ENCODE measurements at regions of chr1 and their contacts with region 1.

Region 1: GRCh38 chr1:160837558-160838205 is 25.0 kb downstream of the CD244 start:
- DNase-seq: peak; percentile 52 to 91 (median 87)
- ATAC-seq: peak; percentile 97
- H3K4me3 ChIP-seq: peak overlapping the region; percentile 37
- H3K4me3 Mint-ChIP-seq: peak overlapping the region; percentile 62 to 90 (median 76)
- H3K27ac ChIP-seq: peak overlapping the region; percentile 69
- H3K27ac Mint-ChIP-seq: peak overlapping the region; percentile 78 to 98 (median 95)
- H3K4me1 ChIP-seq: peaks cover 50 to 60% of the 10 kb centered on the region in 2 donors
- H3K4me1 Mint-ChIP-seq: peaks cover 57 to 83% (median 71%) of the 10 kb centered on the region in 7 donors
- H3K27me3 ChIP-seq: no peaks in the 10 kb centered on the region
- H3K27me3 Mint-ChIP-seq: no peaks in the 10 kb centered on the region

Region 2: GRCh38 chr1:160777486-160778089 is 60.1 kb before region 1 on chr1:
- CTCF ChIA-PET with region 1: interaction called, 49 read pairs
- POLR2A ChIA-PET with region 1: interaction called, 3 read pairs
- intact Hi-C with region 1: no loop called
- DNase-seq: peak in 7 of 9 donors; percentile 50 to 74 (median 68)
- ATAC-seq: peak; percentile 80
- H3K4me3 ChIP-seq: no peak overlapping the region
- H3K4me3 Mint-ChIP-seq: no peak overlapping the region
- H3K27ac ChIP-seq: no peak overlapping the region
- H3K27ac Mint-ChIP-seq: peak overlapping the region in 4 of 9 donors; percentile 17 to 80 (median 37)
- H3K4me1 ChIP-seq: peaks cover 0 to 11% of the 10 kb centered on the region in 2 donors
- H3K4me1 Mint-ChIP-seq: peaks cover 12 to 42% (median 15%) of the 10 kb centered on the region in 7 donors
- H3K27me3 ChIP-seq: no peaks in the 10 kb centered on the region
- H3K27me3 Mint-ChIP-seq: no peaks in the 10 kb centered on the region

Region 3: DNA sequence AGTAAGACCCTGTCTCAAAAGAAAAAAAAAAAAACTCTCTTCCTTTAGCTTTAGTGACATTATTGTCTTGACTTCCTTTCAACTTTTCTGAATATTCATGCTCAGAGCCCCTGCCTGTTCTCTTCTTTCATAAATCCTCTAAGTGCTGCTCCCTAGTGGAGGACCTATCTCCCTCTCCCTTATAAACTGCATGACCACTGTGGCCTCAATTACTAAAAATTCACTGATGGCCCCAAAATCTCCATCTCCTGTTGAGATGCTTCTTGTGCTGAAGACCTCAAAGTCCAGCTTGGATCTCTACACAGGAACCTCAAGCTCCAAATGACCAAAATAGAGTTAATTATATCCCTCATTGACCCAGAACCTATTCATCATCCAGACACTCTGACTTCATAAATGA is 39.5 kb after region 1 on chr1:
- CTCF ChIA-PET with region 1: interaction called, 65 read pairs
- POLR2A ChIA-PET with region 1: interaction called, 10 read pairs
- intact Hi-C with region 1: loop called (anchors 1 kb)
- DNase-seq: peak in 7 of 9 donors; percentile 32 to 72 (median 50)
- ATAC-seq: peak; percentile 83
- H3K4me3 ChIP-seq: no peak overlapping the region
- H3K4me3 Mint-ChIP-seq: peak overlapping the region in 2 of 10 donors; percentile 1 to 4
- H3K27ac ChIP-seq: no peak overlapping the region
- H3K27ac Mint-ChIP-seq: peak overlapping the region in 4 of 9 donors; percentile 5 to 15 (median 10)
- H3K4me1 ChIP-seq: peaks cover 8 to 10% of the 10 kb centered on the region in 2 donors
- H3K4me1 Mint-ChIP-seq: peaks cover 15 to 28% (median 23%) of the 10 kb centered on the region in 7 donors
- H3K27me3 ChIP-seq: no peaks in the 10 kb centered on the region
- H3K27me3 Mint-ChIP-seq: peaks cover 0 to 11% (median 0%) of the 10 kb centered on the region in 5 donors

Region 4: DNA sequence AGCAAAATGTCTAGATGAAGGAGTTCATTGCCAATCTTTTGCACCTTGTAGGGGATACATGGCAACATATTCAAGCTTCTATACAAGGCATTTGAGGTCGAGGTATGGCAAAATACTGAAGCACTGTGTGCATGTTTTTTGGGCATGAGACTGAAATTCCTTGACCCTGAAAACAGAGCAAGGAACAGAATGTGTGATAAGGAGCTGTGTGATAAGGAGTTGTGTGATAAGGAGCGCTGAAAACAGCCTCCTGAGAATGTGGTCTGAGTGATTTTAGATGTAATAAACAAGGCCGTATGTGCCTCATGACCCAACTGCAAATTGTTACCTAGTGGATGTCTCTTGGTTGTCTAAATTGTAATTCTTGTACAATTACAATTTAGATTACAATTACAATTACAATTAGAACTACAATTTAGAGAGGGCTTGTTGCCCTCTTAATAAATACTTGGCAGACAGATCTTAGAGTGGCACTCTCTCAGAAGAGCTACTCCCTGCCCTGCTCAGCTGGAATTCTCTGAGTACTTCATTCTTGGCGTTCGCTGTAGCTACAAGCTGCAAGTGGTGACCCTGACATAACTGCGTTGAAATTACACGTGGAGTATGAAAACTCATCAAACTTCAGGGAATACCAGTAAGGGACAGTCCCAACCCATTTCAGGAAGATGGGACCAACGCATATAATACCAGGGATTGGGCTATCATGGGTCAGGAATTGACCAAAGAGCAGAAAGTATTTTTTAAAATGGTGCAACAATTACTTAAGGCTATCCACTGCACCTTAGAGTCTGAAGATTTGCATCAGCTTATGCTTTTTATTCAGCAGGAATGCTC is 67.3 kb after region 1 on chr1:
- CTCF ChIA-PET with region 1: no interaction called
- POLR2A ChIA-PET with region 1: no interaction called
- intact Hi-C with region 1: no loop called
- DNase-seq: no peak
- ATAC-seq: no peak
- H3K4me3 ChIP-seq: no peak overlapping the region
- H3K4me3 Mint-ChIP-seq: no peak overlapping the region
- H3K27ac ChIP-seq: no peak overlapping the region
- H3K27ac Mint-ChIP-seq: no peak overlapping the region
- H3K4me1 ChIP-seq: no peaks in the 10 kb centered on the region
- H3K4me1 Mint-ChIP-seq: no peaks in the 10 kb centered on the region
- H3K27me3 ChIP-seq: no peaks in the 10 kb centered on the region
- H3K27me3 Mint-ChIP-seq: peaks cover 0 to 26% (median 0%) of the 10 kb centered on the region in 5 donors

Region 5: DNA sequence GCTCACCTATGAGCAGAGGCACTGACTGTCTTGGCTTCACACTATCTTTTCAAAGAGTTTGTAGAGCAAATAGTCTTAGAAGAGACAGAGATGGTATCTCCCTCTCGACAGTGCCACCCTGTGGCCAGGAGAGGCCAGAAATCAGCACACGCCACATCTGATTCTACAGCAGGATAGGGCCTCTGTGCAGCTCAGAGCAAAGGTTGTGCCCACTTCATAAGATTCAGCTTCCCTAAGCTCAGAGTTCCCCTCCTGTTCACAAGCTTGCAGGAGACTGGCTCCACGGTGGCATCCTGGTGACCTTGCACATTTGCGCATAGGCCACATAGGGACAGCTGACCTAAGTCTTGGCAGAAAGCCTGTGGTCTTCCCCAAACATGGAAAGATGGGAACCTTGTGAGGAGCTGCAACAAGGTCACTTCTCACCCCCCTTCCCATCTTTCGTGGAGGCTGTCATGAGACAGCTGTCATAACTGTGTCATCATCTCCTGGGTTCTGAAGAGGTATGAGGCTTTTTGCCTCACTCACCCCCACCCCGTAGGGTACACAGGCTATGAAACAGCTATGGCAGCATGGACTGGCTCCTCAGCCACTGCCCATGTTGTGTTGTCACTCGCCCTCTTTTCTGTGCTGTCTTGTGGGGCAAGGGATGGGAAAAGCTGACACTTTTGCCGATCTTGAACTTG is 113.9 kb after region 1 on chr1:
- CTCF ChIA-PET with region 1: interaction called, 167 read pairs
- POLR2A ChIA-PET with region 1: interaction called, 7 read pairs
- intact Hi-C with region 1: loop called (anchors 1 kb)
- DNase-seq: peak; percentile 53 to 80 (median 71)
- ATAC-seq: peak; percentile 92
- H3K4me3 ChIP-seq: no peak overlapping the region
- H3K4me3 Mint-ChIP-seq: no peak overlapping the region
- H3K27ac ChIP-seq: no peak overlapping the region
- H3K27ac Mint-ChIP-seq: peak overlapping the region in 2 of 9 donors; percentile 26 to 48
- H3K4me1 ChIP-seq: peaks cover 0 to 16% of the 10 kb centered on the region in 2 donors
- H3K4me1 Mint-ChIP-seq: peaks cover 6 to 21% (median 11%) of the 10 kb centered on the region in 7 donors
- H3K27me3 ChIP-seq: no peaks in the 10 kb centered on the region
- H3K27me3 Mint-ChIP-seq: no peaks in the 10 kb centered on the region

Region 6: DNA sequence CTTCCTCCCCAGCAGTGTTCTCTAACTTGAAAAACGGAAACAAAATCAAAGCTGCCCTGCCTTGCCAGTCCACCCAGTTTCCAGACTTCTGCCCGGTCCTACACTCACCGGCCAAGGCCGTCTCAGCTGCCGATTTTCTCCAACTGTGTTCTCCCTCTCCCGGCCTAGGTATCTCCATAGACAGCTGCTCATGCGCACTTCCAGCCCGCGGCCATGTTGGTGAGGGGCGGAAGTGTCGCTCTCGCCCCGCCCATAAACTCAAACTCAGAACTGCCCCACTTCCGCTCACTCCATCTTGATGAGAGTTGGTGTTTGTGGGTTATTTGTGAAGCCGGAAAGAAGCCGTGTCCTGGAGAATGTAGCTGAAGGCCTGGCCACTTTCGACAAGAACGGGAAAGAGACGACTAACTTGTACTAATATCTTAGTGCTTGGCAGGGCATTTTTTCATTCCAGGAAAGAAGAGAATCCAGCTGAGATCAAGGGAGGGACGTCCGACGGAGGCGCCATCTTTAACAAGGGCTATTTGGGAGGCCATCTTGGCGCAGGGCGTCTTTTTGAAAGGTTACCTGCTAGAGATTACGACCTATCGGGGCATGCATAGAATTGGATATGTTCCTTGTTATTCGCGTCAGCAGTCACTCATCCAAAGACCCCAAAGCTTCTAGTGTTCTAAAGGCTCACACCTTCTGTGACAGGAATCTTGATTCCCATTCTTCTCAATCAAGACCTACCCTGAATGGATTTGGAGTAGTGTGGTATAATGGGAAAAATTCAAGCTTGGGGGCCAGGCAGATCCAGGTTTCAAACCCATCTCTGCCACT is 208.3 kb after region 1 on chr1 and contains the start of gene USF1:
- CTCF ChIA-PET with region 1: no interaction called
- POLR2A ChIA-PET with region 1: interaction called, 4 read pairs
- intact Hi-C with region 1: loop called in 1 of 2 experiments (anchors 5 kb)
- DNase-seq: peak; percentile 84 to 96 (median 93)
- ATAC-seq: peak; percentile 89
- H3K4me3 ChIP-seq: peak within 1 kb of the TSS; percentile 93
- H3K4me3 Mint-ChIP-seq: peak within 1 kb of the TSS; percentile 93 to 100 (median 97)
- H3K27ac ChIP-seq: peak within 1 kb of the TSS; percentile 92
- H3K27ac Mint-ChIP-seq: peak within 1 kb of the TSS; percentile 92 to 100 (median 99)
- H3K4me1 ChIP-seq: peaks cover 17 to 23% of the 10 kb centered on the region in 2 donors
- H3K4me1 Mint-ChIP-seq: peaks cover 41 to 54% (median 49%) of the 10 kb centered on the region in 7 donors
- H3K27me3 ChIP-seq: no peaks in the 10 kb centered on the region
- H3K27me3 Mint-ChIP-seq: no peaks in the 10 kb centered on the region
- total RNA-seq, gene USF1: 71.6 to 115 (median 91.7) TPM

Region 7: DNA sequence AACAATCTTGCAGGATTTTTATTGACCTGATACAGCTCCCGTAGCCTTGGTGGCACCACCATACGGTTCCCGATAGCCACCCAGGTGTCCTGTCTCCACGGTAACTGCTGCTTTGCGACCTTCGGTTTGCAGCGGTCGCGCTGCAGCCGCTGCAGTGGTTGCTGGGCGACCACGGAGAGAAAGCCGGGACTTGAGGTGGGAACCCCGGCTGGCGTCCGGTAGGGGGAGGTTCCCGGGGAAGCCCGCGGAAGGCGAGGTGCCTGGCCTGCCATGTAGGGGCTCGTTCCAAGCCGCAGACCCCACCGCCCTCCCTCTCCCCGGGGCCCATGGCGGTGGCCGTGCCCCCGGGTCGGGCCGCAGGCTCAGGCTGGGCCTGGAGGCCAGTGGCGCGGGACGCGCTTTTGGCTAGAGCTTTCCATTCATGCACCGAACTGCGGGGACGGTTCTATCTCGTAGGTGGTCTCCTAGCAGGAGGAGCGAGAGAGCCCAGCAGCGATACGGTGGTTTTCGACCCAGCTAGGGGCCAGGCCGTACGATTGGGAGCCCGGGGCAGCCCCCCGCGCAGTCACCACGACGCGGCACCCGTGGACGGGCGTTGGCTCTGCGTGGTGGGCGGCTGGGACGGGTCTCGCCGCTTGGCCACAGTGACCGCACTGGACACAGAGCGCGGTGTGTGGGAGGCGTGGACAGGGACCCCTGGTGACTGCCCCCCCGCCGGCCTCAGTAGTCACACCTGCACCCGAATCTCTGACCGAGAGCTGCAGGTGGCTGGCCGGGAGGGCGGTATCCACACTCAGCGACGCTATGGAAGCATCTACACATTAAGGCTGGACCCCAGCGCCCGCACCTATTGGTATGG is 260.8 kb after region 1 on chr1 and contains the start of gene KLHDC9:
- CTCF ChIA-PET with region 1: interaction called, 3 read pairs
- POLR2A ChIA-PET with region 1: no interaction called
- intact Hi-C with region 1: loop called in 1 of 2 experiments (anchors 2 kb)
- DNase-seq: peak; percentile 29 to 68 (median 42)
- ATAC-seq: peak; percentile 57
- H3K4me3 ChIP-seq: peak within 1 kb of the TSS; percentile 81
- H3K4me3 Mint-ChIP-seq: peak within 1 kb of the TSS; percentile 81 to 94 (median 90)
- H3K27ac ChIP-seq: peak within 1 kb of the TSS; percentile 47
- H3K27ac Mint-ChIP-seq: peak within 1 kb of the TSS; percentile 87 to 100 (median 96)
- H3K4me1 ChIP-seq: peaks cover 9 to 11% of the 10 kb centered on the region in 2 donors
- H3K4me1 Mint-ChIP-seq: peaks cover 18 to 40% (median 23%) of the 10 kb centered on the region in 7 donors
- H3K27me3 ChIP-seq: no peaks in the 10 kb centered on the region
- H3K27me3 Mint-ChIP-seq: peaks cover 0 to 12% (median 0%) of the 10 kb centered on the region in 5 donors
- total RNA-seq, gene KLHDC9: 0.40 to 1.1 TPM in 2 of 5 experiments, not detected in the others

Region 8: GRCh38 chr1:161159087-161159912 is 321.6 kb after region 1 on chr1 and contains the start of gene USP21:
- CTCF ChIA-PET with region 1: no interaction called
- POLR2A ChIA-PET with region 1: no interaction called
- intact Hi-C with region 1: loop called in 1 of 2 experiments (anchors 5 kb)
- DNase-seq: peak; percentile 86 to 93 (median 91)
- ATAC-seq: peak; percentile 95
- H3K4me3 ChIP-seq: peak within 1 kb of the TSS; percentile 68
- H3K4me3 Mint-ChIP-seq: peak within 1 kb of the TSS; percentile 88 to 94 (median 92)
- H3K27ac ChIP-seq: peak within 1 kb of the TSS; percentile 84
- H3K27ac Mint-ChIP-seq: peak within 1 kb of the TSS; percentile 89 to 97 (median 93)
- H3K4me1 ChIP-seq: peaks cover 31 to 34% of the 10 kb centered on the region in 2 donors
- H3K4me1 Mint-ChIP-seq: peaks cover 35 to 76% (median 67%) of the 10 kb centered on the region in 7 donors
- H3K27me3 ChIP-seq: no peaks in the 10 kb centered on the region
- H3K27me3 Mint-ChIP-seq: no peaks in the 10 kb centered on the region
- total RNA-seq, gene USP21: 36.0 to 66.0 (median 38.6) TPM